Tibial artery (tissue), 4 donors: ENCODE measurements at regions of chr18 and their contacts with region 1.

Region 1: GRCh38 chr18:74291771-74292540 is at the start of gene CYB5A:
- DNase-seq: peak; percentile 97 to 99
- H3K4me3 ChIP-seq: peak within 1 kb of the TSS; percentile 74 to 91
- H3K27ac ChIP-seq: peak within 1 kb of the TSS; percentile 66 to 79
- H3K4me1 ChIP-seq: peaks cover 0 to 34% (median 22%) of the 10 kb centered on the region in 4 donors
- H3K27me3 ChIP-seq: no peaks in the 10 kb centered on the region
- CTCF ChIP-seq: peak; percentile 12 to 20

Region 2: DNA sequence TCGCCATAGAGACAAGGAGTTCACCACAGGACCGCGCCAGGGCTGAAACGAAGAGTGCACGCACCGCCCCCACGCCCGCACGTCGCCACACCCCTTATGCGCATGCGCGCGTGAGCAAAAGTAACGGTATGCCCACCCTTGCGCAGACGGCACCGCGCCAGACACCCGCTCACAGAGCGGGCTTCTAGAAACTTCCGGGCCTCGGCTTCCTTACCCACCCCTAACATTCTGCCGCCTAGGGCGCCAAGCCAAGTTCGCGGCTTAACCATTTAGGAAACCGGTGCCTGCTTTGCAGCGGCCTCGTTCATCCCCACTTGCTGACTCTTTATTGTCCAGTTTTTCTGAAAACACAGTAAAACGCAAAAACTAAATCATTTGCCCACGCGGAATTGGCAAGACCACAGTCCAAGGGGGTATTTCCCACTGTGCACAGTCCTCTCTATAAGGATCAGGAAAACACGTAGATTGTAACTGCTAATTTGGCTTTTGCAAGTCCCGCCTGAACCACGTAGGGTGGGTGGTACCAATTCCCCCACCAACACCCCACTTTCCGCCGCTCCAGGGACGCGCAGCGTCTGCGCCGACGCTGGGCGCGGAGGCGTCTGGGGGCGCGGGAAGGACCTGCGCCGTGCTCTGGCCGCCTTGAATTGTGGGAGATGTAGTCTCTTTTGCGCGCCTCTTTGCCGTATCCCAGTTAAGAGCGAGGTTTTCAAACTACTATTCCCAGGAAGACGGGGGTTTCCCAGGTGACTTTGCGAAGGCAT is 144.0 kb before region 1 on chr18 and contains the starts of genes FBXO15 and TIMM21:
- intact Hi-C with region 1: loop called (anchors 5 kb)
- DNase-seq: peak; percentile 97 to 98
- H3K4me3 ChIP-seq: peak within 1 kb of the TSS; percentile 72 to 74
- H3K27ac ChIP-seq: peak within 1 kb of the TSS; percentile 86 to 92
- H3K4me1 ChIP-seq: peaks cover 0 to 36% (median 27%) of the 10 kb centered on the region in 4 donors
- H3K27me3 ChIP-seq: no peaks in the 10 kb centered on the region
- CTCF ChIP-seq: peak in 1 of 2 experiments; percentile 5

Region 3: GRCh38 chr18:74522635-74523548 is 230.9 kb after region 1 on chr18:
- intact Hi-C with region 1: no loop called
- DNase-seq: peak in 1 of 2 donors; percentile 24
- H3K4me3 ChIP-seq: no peak overlapping the region
- H3K27ac ChIP-seq: no peak overlapping the region
- H3K4me1 ChIP-seq: no peaks in the 10 kb centered on the region
- H3K27me3 ChIP-seq: no peaks in the 10 kb centered on the region
- CTCF ChIP-seq: no peak

Region 4: DNA sequence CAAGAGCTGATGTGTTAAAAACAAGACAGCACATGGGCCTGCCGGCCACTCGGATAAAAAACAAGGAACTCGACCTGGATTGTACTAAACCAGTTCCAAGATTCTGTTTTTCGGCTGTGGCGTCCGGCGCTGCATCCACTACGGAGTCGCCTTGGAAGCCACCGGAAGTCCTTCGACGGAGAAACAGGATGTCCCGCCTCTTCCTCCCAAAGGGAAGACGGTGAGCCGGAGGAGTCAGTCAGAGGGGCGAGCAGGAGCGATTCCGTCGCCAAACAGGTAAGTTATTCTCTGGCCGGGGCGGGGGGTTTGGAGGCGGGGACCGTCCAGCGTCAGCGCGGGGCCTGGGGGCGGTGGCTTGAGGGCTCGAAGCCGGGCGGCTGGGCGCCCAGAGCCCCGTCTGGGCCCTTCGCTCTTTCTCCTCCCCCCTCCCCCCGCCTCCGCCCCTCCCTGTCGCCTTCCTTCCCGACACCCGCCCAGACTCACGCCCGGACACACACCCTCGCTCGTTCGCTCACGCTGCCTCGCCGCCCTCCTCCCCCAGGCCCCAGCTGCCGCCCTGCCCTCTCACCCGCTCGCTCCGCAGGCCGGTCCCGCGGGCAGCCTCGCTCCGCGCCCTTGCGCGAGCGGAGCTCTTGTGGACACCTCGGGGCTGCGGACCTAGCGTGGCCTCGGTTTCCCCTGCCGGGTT is 305.9 kb after region 1 on chr18 and contains the start of gene ZNF407:
- intact Hi-C with region 1: loop called (anchors 5 kb)
- DNase-seq: peak; percentile 85 to 91
- H3K4me3 ChIP-seq: peak within 1 kb of the TSS; percentile 94 to 99
- H3K27ac ChIP-seq: peak within 1 kb of the TSS; percentile 96 to 99
- H3K4me1 ChIP-seq: peaks cover 0 to 25% (median 11%) of the 10 kb centered on the region in 4 donors
- H3K27me3 ChIP-seq: no peaks in the 10 kb centered on the region
- CTCF ChIP-seq: no peak